ENCODE measurements at regions of chr10 and their contacts with region 1.

Region 1: DNA sequence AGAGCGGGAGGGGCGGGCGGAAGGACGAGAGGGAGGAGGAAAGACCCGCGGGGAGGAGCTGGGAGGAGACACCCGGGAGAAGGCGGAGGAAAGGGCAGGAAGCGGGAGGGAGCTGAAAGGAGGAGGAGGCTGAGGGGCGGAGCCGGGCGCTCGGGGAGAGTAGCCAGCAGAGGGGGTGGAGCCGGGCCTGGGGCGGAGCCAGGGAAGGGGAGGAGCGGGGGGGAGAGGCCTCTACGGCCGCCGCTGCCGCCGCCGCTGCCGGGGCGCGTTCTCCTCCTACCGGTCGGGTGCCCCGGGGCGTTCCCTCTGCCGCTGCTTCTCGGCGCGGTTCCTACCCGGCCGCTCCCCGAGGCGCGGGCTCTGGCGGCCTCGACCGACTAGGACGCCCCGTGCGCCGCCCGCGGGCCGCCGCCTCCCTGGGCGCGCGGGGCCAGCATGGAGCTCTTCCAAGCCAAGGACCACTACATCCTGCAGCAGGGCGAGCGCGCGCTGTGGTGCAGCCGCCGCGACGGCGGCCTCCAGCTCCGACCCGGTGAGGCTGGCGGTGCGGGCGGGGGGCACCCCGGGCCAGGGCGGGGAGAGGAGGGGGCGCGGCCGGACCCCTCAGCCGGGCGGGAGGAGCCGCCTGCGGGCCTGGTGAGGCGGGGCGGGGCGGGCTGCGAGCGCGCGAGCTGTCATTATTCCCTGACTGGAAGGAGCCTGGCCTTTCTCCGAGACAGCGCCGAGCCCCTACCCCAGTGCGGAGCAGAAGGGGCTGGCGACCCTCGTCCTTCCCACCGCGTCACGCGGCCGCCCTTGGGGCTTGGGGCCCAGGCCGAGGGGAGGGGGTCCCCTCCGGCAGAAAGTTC is at the start of gene INPP5F:
- DNase-seq: peak; percentile 95
- ATAC-seq: peak; percentile 85; the same call in 2 of the 3 replicates
- H3K4me3 ChIP-seq: peak within 1 kb of the TSS; percentile 86 to 97 (median 88)
- H3K27ac ChIP-seq: peak within 1 kb of the TSS; percentile 95
- H3K4me1 ChIP-seq: peaks cover 50% of the 10 kb centered on the region
- H3K27me3 ChIP-seq: no peaks in the 10 kb centered on the region; a peak in 1 of 5 replicates
- CTCF ChIP-seq: 0 out of 2 replicates have a peak, but pooled peaks have one; percentile 14
- EP300 ChIP-seq: peak in 1 of 2 experiments; percentile 12; a peak in 1 of 4 replicates
- POLR2A ChIP-seq: no peak
- RAD21 ChIP-seq: peak; percentile 57
- total RNA-seq, gene INPP5F: 15.7 and 16.4 TPM in 2 replicates

Region 2: GRCh38 chr10:119596537-119597404 is 129.3 kb before region 1 on chr10 and contains the start of gene TIAL1:
- CTCF ChIA-PET with region 1: no interaction called
- POLR2A ChIA-PET with region 1: interaction called, 6 read pairs
- in situ Hi-C with region 1: no loop called
- intact Hi-C with region 1: loop called (anchors 10 kb)
- DNase-seq: peak; percentile 99
- ATAC-seq: peak; percentile 96
- H3K4me3 ChIP-seq: peak within 1 kb of the TSS; percentile 89 to 90 (median 90)
- H3K27ac ChIP-seq: peak within 1 kb of the TSS; percentile 98
- H3K4me1 ChIP-seq: peaks cover 45% of the 10 kb centered on the region
- H3K27me3 ChIP-seq: no peaks in the 10 kb centered on the region; a peak in 1 of 5 replicates
- CTCF ChIP-seq: 0 out of 2 replicates have a peak, but pooled peaks have one; percentile 14
- EP300 ChIP-seq: peak; percentile 10 to 11; a peak in 1 of 4 replicates
- POLR2A ChIP-seq: peak; percentile 79 to 96
- RAD21 ChIP-seq: no peak; the same call in 1 of the 2 replicates
- total RNA-seq, gene TIAL1: 31.5 and 36.6 TPM in 2 replicates

Region 3: GRCh38 chr10:119686439-119687191 is 39.4 kb before region 1 on chr10:
- CTCF ChIA-PET with region 1: no interaction called
- POLR2A ChIA-PET with region 1: interaction called, 19 read pairs
- in situ Hi-C with region 1: no loop called
- intact Hi-C with region 1: loop called (anchors 2 kb)
- DNase-seq: peak; percentile 70
- ATAC-seq: peak; percentile 88
- H3K4me3 ChIP-seq: peak overlapping the region; percentile 63 to 72 (median 66)
- H3K27ac ChIP-seq: no peak overlapping the region
- H3K4me1 ChIP-seq: peaks cover 20% of the 10 kb centered on the region
- H3K27me3 ChIP-seq: no peaks in the 10 kb centered on the region; a peak in 1 of 5 replicates
- CTCF ChIP-seq: peak; percentile 94
- EP300 ChIP-seq: no peak
- POLR2A ChIP-seq: no peak
- RAD21 ChIP-seq: peak; percentile 89

Region 4: GRCh38 chr10:119737827-119738226 is 11.8 kb after region 1 on chr10:
- CTCF ChIA-PET with region 1: no interaction called
- POLR2A ChIA-PET with region 1: interaction called, 30 read pairs
- in situ Hi-C with region 1: no loop called
- intact Hi-C with region 1: no loop called
- DNase-seq: no peak
- ATAC-seq: no peak
- H3K4me3 ChIP-seq: no peak overlapping the region
- H3K27ac ChIP-seq: no peak overlapping the region
- H3K4me1 ChIP-seq: peaks cover 64% of the 10 kb centered on the region
- H3K27me3 ChIP-seq: no peaks in the 10 kb centered on the region
- CTCF ChIP-seq: no peak
- EP300 ChIP-seq: no peak
- POLR2A ChIP-seq: no peak
- RAD21 ChIP-seq: no peak

Region 5: GRCh38 chr10:119761106-119761505 is 35.1 kb after region 1 on chr10:
- CTCF ChIA-PET with region 1: no interaction called
- POLR2A ChIA-PET with region 1: no interaction called
- in situ Hi-C with region 1: no loop called
- intact Hi-C with region 1: no loop called
- DNase-seq: no peak
- ATAC-seq: no peak
- H3K4me3 ChIP-seq: no peak overlapping the region
- H3K27ac ChIP-seq: peak overlapping the region; percentile 80
- H3K4me1 ChIP-seq: peaks cover 42% of the 10 kb centered on the region
- H3K27me3 ChIP-seq: no peaks in the 10 kb centered on the region
- CTCF ChIP-seq: no peak
- EP300 ChIP-seq: no peak
- POLR2A ChIP-seq: no peak
- RAD21 ChIP-seq: no peak

Region 6: GRCh38 chr10:119872860-119873681 is 147.0 kb after region 1 on chr10:
- CTCF ChIA-PET with region 1: no interaction called
- POLR2A ChIA-PET with region 1: interaction called, 22 read pairs
- in situ Hi-C with region 1: no loop called
- intact Hi-C with region 1: no loop called
- DNase-seq: peak; percentile 68
- ATAC-seq: peak; percentile 92
- H3K4me3 ChIP-seq: peak overlapping the region; percentile 79 to 98 (median 85)
- H3K27ac ChIP-seq: peak overlapping the region; percentile 88
- H3K4me1 ChIP-seq: peaks cover 36% of the 10 kb centered on the region
- H3K27me3 ChIP-seq: no peaks in the 10 kb centered on the region; a peak in 1 of 5 replicates
- CTCF ChIP-seq: peak; percentile 17; the same call in 1 of the 2 replicates
- EP300 ChIP-seq: no peak
- POLR2A ChIP-seq: peak; percentile 77 to 78
- RAD21 ChIP-seq: peak; percentile 16; the same call in 1 of the 2 replicates

Measured in HepG2 (cell line).